ENCODE measurements at regions of chr5 and their contacts with region 1.

Region 1: DNA sequence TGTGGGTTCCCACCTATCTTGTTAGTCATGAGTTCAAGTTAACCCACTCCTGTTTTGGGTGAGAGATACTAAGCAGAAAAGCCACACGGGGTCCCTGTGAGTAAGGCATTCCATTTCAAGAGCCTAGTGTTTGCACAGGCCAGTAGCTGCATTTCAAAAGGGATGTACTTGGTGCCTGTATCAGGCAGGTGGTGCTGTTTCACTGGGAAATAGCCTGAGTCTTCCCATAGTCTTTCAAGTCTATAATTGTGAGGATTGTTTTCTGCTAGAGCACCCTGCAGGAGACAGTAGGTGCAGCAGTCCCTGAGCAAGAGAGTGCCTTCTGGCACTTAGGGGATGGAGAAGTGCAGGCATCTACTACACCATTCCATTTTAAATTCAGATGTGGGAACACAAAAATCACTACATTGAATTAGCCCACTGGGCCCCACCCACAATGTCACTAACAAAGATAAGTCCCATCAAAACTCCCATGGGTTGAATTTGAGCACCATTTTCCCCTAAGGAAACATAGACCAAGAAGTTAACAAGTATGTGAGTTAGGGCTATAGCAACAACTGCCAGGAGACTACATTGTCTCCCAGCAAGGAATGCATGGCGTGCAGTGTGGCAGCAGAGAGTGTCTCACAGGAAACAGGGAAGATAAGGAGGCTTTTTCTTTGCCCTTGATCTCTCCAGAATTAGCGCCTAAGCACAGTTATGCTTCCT is 263.2 kb downstream of the COX7C start:
- DNase-seq: peak; percentile 64
- H3K4me3 ChIP-seq: no peak overlapping the region
- CTCF ChIP-seq: peak; percentile 74

Region 2: GRCh38 chr5:86461169-86461956 is 419.6 kb before region 1 on chr5:
- CTCF ChIA-PET with region 1: no interaction called
- POLR2A ChIA-PET with region 1: no interaction called
- DNase-seq: no peak
- H3K4me3 ChIP-seq: no peak overlapping the region
- CTCF ChIP-seq: no peak

Region 3: DNA sequence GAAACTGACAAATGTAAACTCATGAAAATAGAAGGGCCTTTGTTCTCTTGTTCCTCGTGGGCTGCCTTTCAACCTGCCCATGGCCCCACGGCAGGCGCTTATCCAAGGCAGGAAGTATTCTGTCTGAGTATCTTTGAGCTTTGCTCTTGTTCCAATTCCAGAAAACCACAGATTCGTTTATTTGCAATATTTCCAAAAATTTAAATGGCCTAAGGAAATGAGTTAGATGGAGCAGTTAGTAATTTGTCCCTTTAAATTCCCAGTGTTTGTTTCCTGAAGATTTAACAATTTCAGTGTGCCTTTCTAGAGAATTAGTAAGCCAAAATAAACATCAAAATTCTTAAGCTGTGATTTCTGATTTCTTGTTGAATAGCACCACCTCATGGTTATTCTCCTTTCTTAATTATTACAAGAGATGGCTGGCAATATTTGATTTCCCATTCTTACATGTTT is 87.4 kb after region 1 on chr5:
- CTCF ChIA-PET with region 1: interaction called, 132 read pairs
- POLR2A ChIA-PET with region 1: no interaction called
- DNase-seq: peak; percentile 9
- H3K4me3 ChIP-seq: no peak overlapping the region
- CTCF ChIP-seq: no peak

Region 4: GRCh38 chr5:87010736-87011135 is 129.8 kb after region 1 on chr5:
- CTCF ChIA-PET with region 1: interaction called, 65 read pairs
- POLR2A ChIA-PET with region 1: no interaction called
- DNase-seq: no peak
- H3K4me3 ChIP-seq: no peak overlapping the region
- CTCF ChIP-seq: no peak

Region 5: DNA sequence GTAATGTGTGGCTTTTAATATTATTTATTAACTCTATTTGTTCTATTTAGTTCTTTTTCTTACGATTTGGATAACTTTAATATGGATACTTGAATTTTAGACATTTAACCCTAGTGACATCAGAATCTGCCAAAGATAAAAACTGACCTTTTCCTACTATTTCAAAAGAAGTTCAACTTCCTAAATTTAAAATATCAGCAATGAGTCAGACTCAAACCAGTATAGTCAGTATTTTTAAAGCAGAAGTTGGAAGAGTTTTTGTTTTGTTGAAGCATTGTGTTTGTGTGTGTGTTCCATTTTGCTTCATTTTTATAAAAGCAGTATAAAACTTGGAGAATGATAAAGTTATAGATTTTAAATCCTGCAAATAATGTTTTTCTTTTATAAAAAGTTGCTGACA is 135.0 kb after region 1 on chr5:
- CTCF ChIA-PET with region 1: interaction called, 65 read pairs
- POLR2A ChIA-PET with region 1: no interaction called
- DNase-seq: no peak
- H3K4me3 ChIP-seq: no peak overlapping the region
- CTCF ChIP-seq: no peak

Measured in AG04449 (cell line).